Endothelial cell of umbilical vein (primary cell): ENCODE measurements at regions of chr15 and their contacts with region 1.

Region 1: GRCh38 chr15:85296615-85297402 is 83.6 kb upstream of the AKAP13 start:
- DNase-seq: peak; percentile 85
- H3K4me3 ChIP-seq: no peak overlapping the region
- H3K27ac ChIP-seq: no peak overlapping the region
- H3K4me1 ChIP-seq: peaks cover 7% of the 10 kb centered on the region
- H3K27me3 ChIP-seq: peaks cover 0 to 2% of the 10 kb centered on the region in 2 experiments
- CTCF ChIP-seq: peak; percentile 62 to 71
- POLR2A ChIP-seq: no peak

Region 2: GRCh38 chr15:85330901-85331588 is 34.2 kb after region 1 on chr15:
- CTCF ChIA-PET with region 1: interaction called, 11 read pairs
- POLR2A ChIA-PET with region 1: no interaction called
- dilution Hi-C with region 1: no loop called
- intact Hi-C with region 1: no loop called
- DNase-seq: peak; percentile 73
- H3K4me3 ChIP-seq: no peak overlapping the region
- H3K27ac ChIP-seq: peak overlapping the region; percentile 6
- H3K4me1 ChIP-seq: peaks cover 14% of the 10 kb centered on the region
- H3K27me3 ChIP-seq: no peaks in the 10 kb centered on the region
- CTCF ChIP-seq: peak; percentile 72 to 79
- POLR2A ChIP-seq: no peak

Region 3: DNA sequence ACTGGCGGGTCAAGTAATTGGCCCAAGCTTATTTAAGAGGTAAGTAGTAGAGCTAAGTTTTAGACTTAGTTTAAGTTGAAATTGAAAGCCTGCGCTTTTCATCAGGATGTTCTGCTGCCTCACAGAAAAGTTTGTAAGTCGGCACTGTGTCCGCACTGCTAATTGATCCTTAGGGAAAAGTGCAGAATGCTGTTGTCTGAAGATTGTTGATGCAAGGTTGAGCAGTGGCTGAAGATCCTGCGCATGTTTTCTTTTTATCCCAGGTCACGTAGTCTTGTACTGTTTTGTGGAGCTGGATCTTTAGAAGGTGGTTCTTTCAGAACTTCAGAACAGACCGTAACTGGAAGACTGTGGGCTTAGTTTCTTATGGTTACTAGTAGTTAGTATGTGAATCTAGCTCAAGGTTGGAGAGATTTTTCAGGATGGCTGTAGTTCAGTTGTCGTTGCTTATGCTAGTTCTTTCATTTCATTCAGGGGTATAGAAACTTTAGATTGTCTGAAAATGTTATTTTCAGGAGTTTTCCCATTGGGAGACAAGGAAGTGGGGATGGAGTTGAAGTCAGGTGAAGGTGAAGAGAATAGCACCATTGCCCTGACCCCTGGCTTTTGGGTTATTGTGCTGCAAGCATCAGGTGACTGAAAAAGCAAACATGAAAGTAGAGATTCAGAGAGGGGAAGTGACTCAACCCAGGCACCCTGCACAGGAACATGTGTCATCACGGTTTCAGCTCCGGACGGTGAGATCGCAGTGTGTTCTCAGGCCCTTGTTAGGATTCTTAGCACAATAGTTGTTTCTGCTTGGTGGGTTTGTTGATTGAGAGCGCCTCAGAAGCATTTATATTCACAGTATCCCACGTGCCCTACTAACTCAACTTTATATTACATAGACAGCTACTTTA is 116.4 kb after region 1 on chr15:
- CTCF ChIA-PET with region 1: interaction called, 107 read pairs
- POLR2A ChIA-PET with region 1: no interaction called
- dilution Hi-C with region 1: no loop called
- intact Hi-C with region 1: loop called (anchors 1 kb)
- DNase-seq: peak; percentile 98
- H3K4me3 ChIP-seq: no peak overlapping the region
- H3K27ac ChIP-seq: peak overlapping the region; percentile 77
- H3K4me1 ChIP-seq: peaks cover 38% of the 10 kb centered on the region
- H3K27me3 ChIP-seq: no peaks in the 10 kb centered on the region
- CTCF ChIP-seq: no peak
- POLR2A ChIP-seq: no peak

Region 4: GRCh38 chr15:85504749-85505676 is 208.2 kb after region 1 on chr15:
- CTCF ChIA-PET with region 1: interaction called, 47 read pairs
- POLR2A ChIA-PET with region 1: no interaction called
- dilution Hi-C with region 1: no loop called
- intact Hi-C with region 1: loop called (anchors 1 kb)
- DNase-seq: peak; percentile 64
- H3K4me3 ChIP-seq: no peak overlapping the region
- H3K27ac ChIP-seq: no peak overlapping the region
- H3K4me1 ChIP-seq: peaks cover 11% of the 10 kb centered on the region
- H3K27me3 ChIP-seq: no peaks in the 10 kb centered on the region
- CTCF ChIP-seq: peak; percentile 34 to 41
- POLR2A ChIP-seq: no peak

Region 5: DNA sequence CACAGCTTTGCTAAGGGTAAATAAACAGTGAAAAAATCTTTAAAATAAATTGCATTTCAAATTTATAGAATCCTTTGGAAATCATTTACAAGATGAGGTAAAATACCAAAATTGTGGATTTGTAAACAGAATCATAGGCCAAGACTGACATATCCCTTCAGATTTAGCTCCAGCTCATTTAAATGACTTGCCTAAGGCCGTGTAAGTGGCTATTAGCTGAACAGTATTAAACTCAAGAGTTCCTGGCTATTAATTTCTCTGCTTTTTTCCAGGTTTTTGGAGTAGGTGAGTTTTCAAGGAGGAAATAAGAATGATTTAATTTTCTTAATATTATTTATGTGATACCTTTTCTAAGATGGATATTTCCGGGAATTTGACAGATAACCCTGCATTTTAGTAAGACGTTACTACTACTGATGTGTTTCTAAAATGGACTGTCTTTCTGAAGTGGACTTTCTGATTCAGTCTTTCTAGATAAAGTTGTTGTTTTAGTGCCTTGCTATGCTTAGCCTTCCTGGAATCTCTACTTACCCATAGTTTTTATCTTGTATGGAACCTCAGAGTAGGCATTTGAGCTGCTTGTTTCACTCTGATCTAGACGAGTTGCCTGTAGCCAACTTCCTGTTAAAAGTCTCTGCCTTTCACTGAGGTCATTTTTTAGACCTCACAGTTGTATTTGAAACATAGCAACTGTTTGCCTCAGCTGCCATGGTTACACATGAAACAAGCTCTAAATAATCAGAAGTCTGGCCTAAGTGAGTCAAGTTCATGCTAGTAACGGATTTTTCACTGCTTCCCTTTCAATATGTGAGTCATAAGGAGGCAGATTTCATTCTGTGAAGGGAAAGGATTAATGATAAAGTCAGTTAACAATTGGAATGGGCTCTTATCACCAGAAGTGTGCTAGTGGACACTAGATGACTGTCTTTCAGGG is 370.9 kb after region 1 on chr15:
- CTCF ChIA-PET with region 1: interaction called, 10 read pairs
- POLR2A ChIA-PET with region 1: no interaction called
- dilution Hi-C with region 1: no loop called
- intact Hi-C with region 1: no loop called
- DNase-seq: peak; percentile 99
- H3K4me3 ChIP-seq: peak overlapping the region in 1 of 3 experiments; percentile 10
- H3K27ac ChIP-seq: peak overlapping the region; percentile 96
- H3K4me1 ChIP-seq: peaks cover 18% of the 10 kb centered on the region
- H3K27me3 ChIP-seq: no peaks in the 10 kb centered on the region
- CTCF ChIP-seq: no peak
- POLR2A ChIP-seq: no peak

Region 6: DNA sequence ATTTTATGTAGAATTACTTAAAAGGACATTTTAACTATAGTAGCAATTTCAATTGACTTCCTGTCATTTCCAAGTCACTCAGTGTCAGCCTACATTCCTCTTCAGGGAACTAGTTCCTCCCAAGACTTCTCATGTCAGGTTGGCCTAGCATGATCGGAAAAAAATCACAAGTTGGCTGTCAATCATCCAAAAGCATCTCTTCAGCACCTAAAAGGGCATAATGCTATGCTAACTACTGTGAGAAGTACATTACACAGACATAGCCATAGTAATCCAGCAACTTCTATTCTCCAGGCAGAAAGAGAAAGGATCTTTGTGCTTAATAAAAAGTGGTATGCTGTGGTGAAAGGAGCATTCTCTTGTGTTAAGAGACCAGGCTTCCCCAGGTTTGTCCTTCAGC is 1676.6 kb after region 1 on chr15:
- CTCF ChIA-PET with region 1: no interaction called
- POLR2A ChIA-PET with region 1: no interaction called
- dilution Hi-C with region 1: no loop called
- intact Hi-C with region 1: no loop called
- DNase-seq: no peak
- H3K4me3 ChIP-seq: no peak overlapping the region
- H3K27ac ChIP-seq: no peak overlapping the region
- H3K4me1 ChIP-seq: no peaks in the 10 kb centered on the region
- H3K27me3 ChIP-seq: no peaks in the 10 kb centered on the region
- CTCF ChIP-seq: no peak
- POLR2A ChIP-seq: no peak